ENCODE measurements at regions of chr11 and their contacts with region 1.

Region 1: DNA sequence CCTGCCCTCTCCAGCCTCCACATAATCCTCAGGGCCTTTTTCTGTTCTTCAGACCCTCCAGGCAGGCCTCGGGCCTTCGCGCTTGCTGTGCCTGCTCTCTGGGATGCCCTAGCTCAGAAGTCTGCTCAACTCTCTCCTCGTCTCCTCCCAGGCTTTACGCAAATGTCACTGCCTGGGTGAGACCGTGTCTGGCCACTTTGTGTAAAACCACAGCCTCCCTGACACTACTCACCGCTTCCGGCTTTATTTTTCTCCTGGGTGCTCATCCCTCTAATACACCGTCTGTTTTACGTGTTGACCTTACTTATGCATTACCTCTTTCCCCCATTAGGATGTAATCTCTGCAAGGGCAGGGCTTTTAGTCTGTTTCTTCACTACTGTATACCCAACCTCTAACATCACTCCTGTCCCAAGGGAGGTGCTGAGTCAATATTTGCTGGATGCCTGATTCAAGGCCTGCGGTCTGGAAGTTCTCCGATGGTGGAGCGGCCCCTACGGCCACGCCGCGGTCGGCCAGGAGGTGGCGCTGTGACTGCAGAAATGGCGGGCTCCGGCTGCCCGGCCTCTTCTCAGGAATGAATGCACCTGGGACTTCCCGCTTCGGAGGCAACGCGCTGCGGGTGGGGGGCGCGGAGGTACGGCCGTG is 58.2 kb upstream of the THY1 start:
- DNase-seq: peak; percentile 86
- H3K4me3 ChIP-seq: no peak overlapping the region
- H3K27ac ChIP-seq: no peak overlapping the region
- H3K4me1 ChIP-seq: no peaks in the 10 kb centered on the region
- H3K27me3 ChIP-seq: no peaks in the 10 kb centered on the region
- CTCF ChIP-seq: peak; percentile 97

Region 2: DNA sequence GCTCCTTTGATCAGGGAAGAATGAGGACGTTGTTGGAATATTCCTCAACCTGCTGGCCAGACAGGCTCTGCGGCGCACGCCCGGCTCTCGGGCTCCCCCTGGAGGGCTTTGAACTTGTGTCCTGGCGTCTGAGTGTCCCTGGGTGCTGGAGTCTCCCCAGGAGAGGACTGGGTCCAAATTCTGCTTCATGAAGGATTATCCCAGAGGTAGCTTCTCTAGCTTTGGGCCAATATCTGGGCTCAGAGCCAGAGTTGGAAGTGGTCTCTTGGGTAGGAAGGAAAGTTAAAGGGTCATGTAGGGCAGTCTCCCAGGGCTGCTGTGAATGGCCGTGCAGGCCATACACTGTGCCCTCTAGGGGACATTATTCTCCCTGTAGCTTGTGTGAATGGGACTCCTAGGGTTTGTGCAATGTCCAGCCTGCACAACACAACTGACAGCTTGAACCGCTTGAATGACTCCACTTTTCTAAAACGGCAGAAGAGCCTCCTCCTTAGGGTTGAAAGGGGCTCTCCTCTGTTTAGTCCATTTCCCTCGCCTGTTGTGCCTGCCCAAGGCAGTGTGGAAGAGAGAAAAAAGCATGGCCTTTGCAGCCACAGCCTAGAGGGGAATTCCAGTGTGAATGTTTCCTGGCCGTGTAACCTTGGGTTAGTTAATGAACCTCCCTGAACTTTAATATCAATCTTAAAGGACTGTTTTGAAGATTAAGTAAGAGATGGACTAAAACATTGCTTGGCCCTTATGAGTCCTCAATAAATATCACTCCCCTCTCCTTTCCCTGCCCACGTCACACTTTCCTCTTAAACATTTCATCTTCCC is 53.0 kb after region 1 on chr11:
- intact Hi-C with region 1: loop called (anchors 5 kb)
- DNase-seq: peak; percentile 73
- H3K4me3 ChIP-seq: no peak overlapping the region
- H3K27ac ChIP-seq: no peak overlapping the region
- H3K4me1 ChIP-seq: no peaks in the 10 kb centered on the region
- H3K27me3 ChIP-seq: no peaks in the 10 kb centered on the region
- CTCF ChIP-seq: peak; percentile 90